GM23248 (cell line): ENCODE measurements at regions of chr13 and their contacts with region 1.

Region 1: DNA sequence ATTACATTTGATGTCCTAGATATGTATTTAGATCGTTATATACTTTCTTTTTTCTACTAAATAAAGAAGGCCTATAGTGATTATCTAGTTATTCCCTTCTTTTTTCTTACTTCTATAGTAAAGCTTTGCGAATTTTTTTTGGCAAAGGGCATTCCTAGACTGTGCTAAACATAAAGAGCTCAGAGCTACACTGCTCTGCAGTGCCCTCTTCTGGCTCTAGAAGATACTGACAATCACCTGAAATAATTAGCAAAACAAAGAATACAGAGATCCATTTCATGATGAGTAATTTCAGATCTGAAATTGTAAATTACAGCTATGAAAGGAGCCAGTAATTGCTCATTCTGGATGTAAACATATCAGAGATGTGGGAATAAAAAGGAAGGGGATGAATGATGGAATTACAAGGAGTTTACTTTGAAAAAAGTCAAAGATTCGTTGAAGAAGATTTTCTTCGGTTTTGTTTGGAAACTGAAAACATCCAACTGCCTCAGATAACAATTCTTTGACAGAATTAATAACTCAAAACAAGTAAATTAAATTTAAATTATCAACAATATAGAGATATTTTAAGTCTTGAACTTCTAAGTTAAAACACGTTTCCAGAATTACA is 288.5 kb downstream of the NALCN start:
- DNase-seq: peak; percentile 66
- H3K4me3 ChIP-seq: no peak overlapping the region
- H3K27ac ChIP-seq: no peak overlapping the region
- H3K4me1 ChIP-seq: no peaks in the 10 kb centered on the region
- H3K27me3 ChIP-seq: 0 out of 2 replicates have a peak, but pooled peaks cover 15% of the 10 kb centered on the region

Region 2: GRCh38 chr13:100588331-100589177 is 539.3 kb before region 1 on chr13 and contains the start of gene GGACT:
- in situ Hi-C with region 1: loop called (anchors 10 kb)
- DNase-seq: peak; percentile 80
- H3K4me3 ChIP-seq: peak within 1 kb of the TSS; percentile 73
- H3K27ac ChIP-seq: no peak within 1 kb of the TSS; the same call in 1 of the 2 replicates
- H3K4me1 ChIP-seq: 0 out of 2 replicates have a peak, but pooled peaks cover 4% of the 10 kb centered on the region
- H3K27me3 ChIP-seq: no peaks in the 10 kb centered on the region
- total RNA-seq, gene GGACT: 1.6 and 2.8 TPM in 2 replicates

Region 3: GRCh38 chr13:100941377-100942368 is 186.2 kb before region 1 on chr13:
- in situ Hi-C with region 1: no loop called
- DNase-seq: no peak
- H3K4me3 ChIP-seq: no peak overlapping the region
- H3K27ac ChIP-seq: no peak overlapping the region
- H3K4me1 ChIP-seq: no peaks in the 10 kb centered on the region
- H3K27me3 ChIP-seq: no peaks in the 10 kb centered on the region

Region 4: GRCh38 chr13:102555917-102556553 is 1428.2 kb after region 1 on chr13:
- in situ Hi-C with region 1: loop called (anchors 25 kb)
- DNase-seq: peak; percentile 63
- H3K4me3 ChIP-seq: peak overlapping the region; percentile 45
- H3K27ac ChIP-seq: no peak overlapping the region
- H3K4me1 ChIP-seq: no peaks in the 10 kb centered on the region
- H3K27me3 ChIP-seq: no peaks in the 10 kb centered on the region